K562 (cell line): ENCODE measurements at regions of chr5 and their contacts with region 1.

Region 1: GRCh38 chr5:176537608-176538504 is 654 bp upstream of the RNF44 start:
- DNase-seq: peak; percentile 84 to 99 (median 88)
- ATAC-seq: peak; percentile 77
- H3K4me3 ChIP-seq: peak overlapping the region; percentile 91
- H3K27ac ChIP-seq: peak overlapping the region; percentile 98
- H3K4me1 ChIP-seq: peaks cover 56 to 68% of the 10 kb centered on the region in 2 experiments
- H3K27me3 ChIP-seq: no peaks in the 10 kb centered on the region
- CTCF ChIP-seq: no peak
- EP300 ChIP-seq: no peak
- POLR2A ChIP-seq: peak; percentile 73
- RAD21 ChIP-seq: no peak

Region 2: GRCh38 chr5:176447982-176448608 is 89.8 kb before region 1 on chr5 and contains the start of gene FAF2:
- CTCF ChIA-PET with region 1: interaction called, 3 read pairs
- POLR2A ChIA-PET with region 1: interaction called, 7 read pairs
- in situ Hi-C with region 1: no loop called
- intact Hi-C with region 1: loop called (anchors 2 kb)
- DNase-seq: peak; percentile 98 to 99 (median 98)
- ATAC-seq: peak; percentile 97
- H3K4me3 ChIP-seq: peak within 1 kb of the TSS; percentile 88
- H3K27ac ChIP-seq: peak within 1 kb of the TSS; percentile 98
- H3K4me1 ChIP-seq: peaks cover 6 to 21% of the 10 kb centered on the region in 2 experiments; a peak in 4 of 5 replicates
- H3K27me3 ChIP-seq: no peaks in the 10 kb centered on the region
- CTCF ChIP-seq: peak; percentile 83 to 98 (median 96)
- EP300 ChIP-seq: peak; percentile 51; the same call in 1 of the 2 replicates
- POLR2A ChIP-seq: peak; percentile 92
- RAD21 ChIP-seq: no peak
- polyA plus RNA-seq, gene FAF2: 25.2 to 32.8 TPM

Region 3: DNA sequence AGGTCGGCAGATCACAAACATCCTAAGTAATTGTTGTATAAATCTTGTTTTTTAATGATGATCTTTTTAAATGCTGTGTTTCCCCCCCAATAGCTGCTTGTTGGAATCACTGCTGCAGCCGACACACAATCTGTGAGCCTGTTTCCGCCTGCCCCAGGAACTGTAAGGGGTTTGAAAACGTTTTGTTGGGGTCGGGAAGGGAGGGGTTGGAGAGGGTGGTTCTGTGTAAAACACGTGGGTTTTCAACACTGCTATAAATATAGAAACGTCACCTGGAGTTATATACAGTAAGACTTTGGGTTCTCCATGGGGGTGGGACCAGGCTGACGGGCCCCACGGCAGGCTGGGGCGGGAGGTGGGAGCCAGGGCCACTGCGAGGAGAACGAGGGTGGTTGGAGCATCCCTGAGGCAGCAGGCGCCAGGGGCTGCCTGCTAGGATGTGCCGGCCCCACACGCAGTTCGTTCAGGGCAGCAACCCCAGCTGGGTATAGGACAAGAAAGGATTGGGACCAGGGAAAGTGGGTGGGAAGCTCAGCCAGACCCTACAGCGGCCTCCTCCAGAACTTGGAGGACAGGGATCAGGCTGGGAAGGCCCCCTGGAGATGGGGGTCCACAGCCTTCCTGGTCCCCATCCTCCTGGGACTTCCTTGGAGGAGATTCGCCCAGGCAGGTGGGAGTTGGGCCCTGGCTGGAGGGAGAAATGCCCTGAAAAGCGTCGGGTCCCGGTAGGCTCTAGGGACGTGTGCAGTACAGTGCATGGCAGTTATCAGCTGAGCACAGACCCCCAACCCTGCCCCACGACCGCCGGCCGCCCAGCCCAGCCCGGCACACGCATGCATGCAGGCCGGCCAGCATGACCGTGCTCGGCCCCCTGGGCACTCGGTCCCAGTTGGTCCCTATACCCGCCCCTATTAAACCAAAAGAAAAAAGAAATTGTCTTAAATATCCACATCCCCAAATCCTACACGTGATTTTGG is 10.3 kb before region 1 on chr5:
- CTCF ChIA-PET with region 1: no interaction called
- POLR2A ChIA-PET with region 1: interaction called, 39 read pairs
- in situ Hi-C with region 1: no loop called
- intact Hi-C with region 1: no loop called
- DNase-seq: no peak
- ATAC-seq: peak; percentile 22
- H3K4me3 ChIP-seq: no peak overlapping the region
- H3K27ac ChIP-seq: no peak overlapping the region
- H3K4me1 ChIP-seq: peaks cover 0 to 30% of the 10 kb centered on the region in 2 experiments; a peak in 2 of 5 replicates
- H3K27me3 ChIP-seq: no peaks in the 10 kb centered on the region
- CTCF ChIP-seq: no peak
- EP300 ChIP-seq: no peak
- POLR2A ChIP-seq: no peak
- RAD21 ChIP-seq: no peak